Activated B cell treated with CpG ODN at 0.5 μM for 24 hours (primary cell): ENCODE measurements at regions of chr14 and their contacts with region 1.

Region 1: GRCh38 chr14:91510174-91511042 is at the start of gene PPP4R3A:
- DNase-seq: peak; percentile 91
- ATAC-seq: peak; percentile 85
- H3K4me3 Mint-ChIP-seq: peak within 1 kb of the TSS; percentile 99
- H3K27ac Mint-ChIP-seq: peak within 1 kb of the TSS; percentile 100
- H3K4me1 Mint-ChIP-seq: peaks cover 32% of the 10 kb centered on the region
- H3K27me3 Mint-ChIP-seq: peaks cover 2% of the 10 kb centered on the region
- CTCF ChIP-seq: no peak
- total RNA-seq, gene PPP4R3A: 138 and 141 TPM in 2 replicates

Region 2: DNA sequence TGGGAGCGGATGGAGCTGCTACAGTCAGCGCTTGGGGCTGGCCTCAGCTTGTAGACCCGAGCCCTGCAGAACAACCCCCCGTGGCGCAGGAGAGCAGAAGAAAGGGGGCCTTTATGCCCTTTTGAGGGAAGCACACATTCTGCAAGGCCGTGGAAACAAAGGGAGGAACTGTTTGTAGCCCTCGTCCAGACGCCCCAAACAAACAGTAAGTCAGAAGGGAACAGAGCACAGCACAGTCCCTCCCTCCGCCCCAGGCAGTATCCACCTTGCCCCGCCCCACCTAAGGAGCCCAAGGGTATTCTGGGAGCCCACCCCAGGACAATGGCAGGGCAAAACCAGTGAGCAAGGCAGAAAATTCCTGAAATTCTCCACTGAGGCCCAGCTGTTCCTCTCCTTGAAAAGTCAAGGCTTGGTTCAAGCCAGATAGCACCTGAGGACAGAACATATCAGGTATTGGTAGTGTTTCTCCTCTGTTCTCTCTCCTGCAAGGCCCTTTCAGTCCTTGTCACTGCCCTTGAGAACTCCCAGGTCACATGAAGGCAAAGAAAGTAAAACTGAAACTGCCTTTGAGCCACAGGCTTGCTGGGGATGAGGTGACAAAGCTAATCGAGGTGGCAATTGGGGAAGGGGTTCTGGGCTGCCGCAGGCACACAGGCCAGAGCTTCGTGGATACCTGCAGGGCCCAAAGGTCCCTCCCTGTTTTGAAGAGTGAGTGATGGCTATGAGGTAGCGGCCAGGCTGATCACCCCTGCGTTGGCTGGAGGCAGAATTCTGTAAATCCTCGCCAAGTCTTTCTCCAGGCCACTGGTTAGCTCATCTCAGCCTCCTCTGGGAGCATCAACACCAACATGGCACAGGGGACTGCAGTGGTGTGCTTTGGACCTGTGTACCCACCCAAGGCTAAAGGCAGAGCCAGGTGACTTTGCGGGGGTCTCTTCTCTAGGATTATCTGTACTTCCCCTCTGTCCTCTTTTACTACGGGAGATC is 396.0 kb before region 1 on chr14:
- CTCF ChIA-PET with region 1: no interaction called
- POLR2A ChIA-PET with region 1: no interaction called
- intact Hi-C with region 1: loop called (anchors 1 kb)
- DNase-seq: peak; percentile 54
- ATAC-seq: peak; percentile 84
- H3K4me3 Mint-ChIP-seq: peak overlapping the region; percentile 98
- H3K27ac Mint-ChIP-seq: peak overlapping the region; percentile 98
- H3K4me1 Mint-ChIP-seq: peaks cover 67% of the 10 kb centered on the region
- H3K27me3 Mint-ChIP-seq: no peaks in the 10 kb centered on the region
- CTCF ChIP-seq: no peak

Region 3: DNA sequence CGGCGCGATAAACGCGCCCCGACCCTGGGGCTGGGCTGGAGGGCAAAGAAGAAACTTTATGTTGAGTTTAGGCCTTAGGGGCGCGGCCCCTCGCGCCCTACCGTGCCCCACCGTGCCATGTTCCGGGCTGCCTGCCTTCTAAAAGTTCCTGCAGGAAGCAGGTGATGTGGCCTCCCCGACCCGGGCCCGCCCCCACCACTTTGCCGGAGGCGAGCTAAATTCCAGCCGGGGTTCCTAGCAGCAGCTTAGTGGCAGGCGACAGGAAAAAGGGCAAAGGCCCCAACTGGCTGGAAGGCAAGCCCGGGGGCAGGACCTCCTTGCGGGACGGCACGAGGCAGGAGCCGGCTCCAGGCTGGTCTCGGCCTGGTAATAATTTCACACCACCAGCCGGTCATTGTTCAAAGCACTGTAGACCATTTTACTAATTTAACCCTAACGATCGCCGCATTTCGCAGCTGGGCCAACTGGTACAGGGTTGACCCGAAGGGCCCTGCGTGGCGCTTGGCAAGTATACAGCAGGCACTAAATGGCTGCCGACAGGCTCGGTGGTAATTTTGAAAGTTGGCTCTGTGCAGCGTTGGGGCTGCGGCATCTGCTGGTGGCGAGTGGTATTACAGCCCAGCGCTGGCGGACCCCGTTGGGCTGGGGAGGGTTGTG is 91.9 kb before region 1 on chr14:
- CTCF ChIA-PET with region 1: no interaction called
- POLR2A ChIA-PET with region 1: interaction called, 11 read pairs
- intact Hi-C with region 1: no loop called
- DNase-seq: peak; percentile 84
- ATAC-seq: peak; percentile 37
- H3K4me3 Mint-ChIP-seq: peak overlapping the region; percentile 81
- H3K27ac Mint-ChIP-seq: peak overlapping the region; percentile 93
- H3K4me1 Mint-ChIP-seq: peaks cover 42% of the 10 kb centered on the region
- H3K27me3 Mint-ChIP-seq: no peaks in the 10 kb centered on the region
- CTCF ChIP-seq: peak; percentile 36

Region 4: DNA sequence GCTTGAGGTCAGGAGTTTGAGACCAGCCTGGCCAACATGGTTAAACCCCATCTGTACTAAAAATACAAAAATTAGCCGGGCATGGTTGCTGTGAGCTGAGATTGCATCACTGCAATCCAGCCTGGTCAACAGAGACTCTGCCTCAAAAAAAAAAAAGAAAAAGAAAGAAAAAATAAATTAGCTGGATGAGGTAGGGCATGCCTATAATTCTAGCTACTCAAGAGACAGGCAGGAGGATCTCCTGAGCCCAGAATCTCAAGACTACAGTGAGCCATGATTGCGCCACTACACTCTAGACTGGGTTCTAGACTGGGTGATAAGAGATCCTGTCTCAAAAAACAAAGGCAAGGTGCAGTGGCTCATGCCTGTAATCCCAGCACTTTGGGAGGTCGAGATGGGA is 17.2 kb before region 1 on chr14:
- CTCF ChIA-PET with region 1: no interaction called
- POLR2A ChIA-PET with region 1: interaction called, 46 read pairs
- intact Hi-C with region 1: loop called (anchors 1 kb)
- DNase-seq: no peak
- ATAC-seq: no peak
- H3K4me3 Mint-ChIP-seq: no peak overlapping the region
- H3K27ac Mint-ChIP-seq: no peak overlapping the region
- H3K4me1 Mint-ChIP-seq: peaks cover 71% of the 10 kb centered on the region
- H3K27me3 Mint-ChIP-seq: no peaks in the 10 kb centered on the region
- CTCF ChIP-seq: no peak

Region 5: GRCh38 chr14:91580876-91581577 is 70.6 kb after region 1 on chr14:
- CTCF ChIA-PET with region 1: no interaction called
- POLR2A ChIA-PET with region 1: no interaction called
- intact Hi-C with region 1: no loop called
- DNase-seq: no peak
- ATAC-seq: no peak
- H3K4me3 Mint-ChIP-seq: no peak overlapping the region
- H3K27ac Mint-ChIP-seq: no peak overlapping the region
- H3K4me1 Mint-ChIP-seq: no peaks in the 10 kb centered on the region
- H3K27me3 Mint-ChIP-seq: peaks cover 14% of the 10 kb centered on the region
- CTCF ChIP-seq: no peak

Region 6: GRCh38 chr14:91774140-91775096 is 264.0 kb after region 1 on chr14:
- CTCF ChIA-PET with region 1: no interaction called
- POLR2A ChIA-PET with region 1: no interaction called
- intact Hi-C with region 1: no loop called
- DNase-seq: no peak
- ATAC-seq: peak; percentile 89
- H3K4me3 Mint-ChIP-seq: peak overlapping the region; percentile 66
- H3K27ac Mint-ChIP-seq: no peak overlapping the region
- H3K4me1 Mint-ChIP-seq: peaks cover 18% of the 10 kb centered on the region
- H3K27me3 Mint-ChIP-seq: peaks cover 5% of the 10 kb centered on the region
- CTCF ChIP-seq: no peak

Region 7: GRCh38 chr14:92039719-92040430 is 529.5 kb after region 1 on chr14 and contains the start of gene TRIP11:
- CTCF ChIA-PET with region 1: no interaction called
- POLR2A ChIA-PET with region 1: interaction called, 13 read pairs
- intact Hi-C with region 1: loop called (anchors 1 kb)
- DNase-seq: peak; percentile 94
- ATAC-seq: peak; percentile 96
- H3K4me3 Mint-ChIP-seq: peak within 1 kb of the TSS; percentile 98
- H3K27ac Mint-ChIP-seq: peak within 1 kb of the TSS; percentile 95
- H3K4me1 Mint-ChIP-seq: peaks cover 40% of the 10 kb centered on the region
- H3K27me3 Mint-ChIP-seq: no peaks in the 10 kb centered on the region
- CTCF ChIP-seq: no peak
- total RNA-seq, gene TRIP11: 46.2 and 59.5 TPM in 2 replicates

Region 8: GRCh38 chr14:92759300-92759678 is 1248.9 kb after region 1 on chr14:
- CTCF ChIA-PET with region 1: no interaction called
- POLR2A ChIA-PET with region 1: no interaction called
- intact Hi-C with region 1: no loop called
- DNase-seq: no peak
- ATAC-seq: no peak
- H3K4me3 Mint-ChIP-seq: no peak overlapping the region
- H3K27ac Mint-ChIP-seq: no peak overlapping the region
- H3K4me1 Mint-ChIP-seq: peaks cover 16% of the 10 kb centered on the region
- H3K27me3 Mint-ChIP-seq: no peaks in the 10 kb centered on the region
- CTCF ChIP-seq: no peak